SK-N-SH (cell line): ENCODE measurements at regions of chr6 and their contacts with region 1.

Region 1: GRCh38 chr6:158644231-158645063 is at the start of gene DYNLT1:
- DNase-seq: peak; percentile 98
- H3K4me3 ChIP-seq: peak within 1 kb of the TSS; percentile 76 to 96
- H3K27ac ChIP-seq: peak within 1 kb of the TSS; percentile 94 to 95
- H3K4me1 ChIP-seq: peaks cover 20 to 30% of the 10 kb centered on the region in 2 experiments
- H3K27me3 ChIP-seq: no peaks in the 10 kb centered on the region
- CTCF ChIP-seq: no peak
- EP300 ChIP-seq: no peak
- RAD21 ChIP-seq: peak; percentile 33
- polyA plus RNA-seq, gene DYNLT1: 306 and 390 TPM in 2 replicates

Region 2: GRCh38 chr6:158621694-158622544 is 22.5 kb before region 1 on chr6:
- CTCF ChIA-PET with region 1: interaction called, 3 read pairs
- POLR2A ChIA-PET with region 1: interaction called, 14 read pairs
- DNase-seq: peak; percentile 85
- H3K4me3 ChIP-seq: no peak overlapping the region; a peak in 1 of 4 replicates
- H3K27ac ChIP-seq: peak overlapping the region in 1 of 2 experiments; percentile 99; a peak in 2 of 4 replicates
- H3K4me1 ChIP-seq: peaks cover 0 to 45% of the 10 kb centered on the region in 2 experiments; a peak in 2 of 4 replicates
- H3K27me3 ChIP-seq: no peaks in the 10 kb centered on the region
- CTCF ChIP-seq: no peak
- EP300 ChIP-seq: peak in 1 of 2 experiments; percentile 87; a peak in 2 of 4 replicates
- RAD21 ChIP-seq: no peak; the same call in 1 of the 2 replicates

Region 3: DNA sequence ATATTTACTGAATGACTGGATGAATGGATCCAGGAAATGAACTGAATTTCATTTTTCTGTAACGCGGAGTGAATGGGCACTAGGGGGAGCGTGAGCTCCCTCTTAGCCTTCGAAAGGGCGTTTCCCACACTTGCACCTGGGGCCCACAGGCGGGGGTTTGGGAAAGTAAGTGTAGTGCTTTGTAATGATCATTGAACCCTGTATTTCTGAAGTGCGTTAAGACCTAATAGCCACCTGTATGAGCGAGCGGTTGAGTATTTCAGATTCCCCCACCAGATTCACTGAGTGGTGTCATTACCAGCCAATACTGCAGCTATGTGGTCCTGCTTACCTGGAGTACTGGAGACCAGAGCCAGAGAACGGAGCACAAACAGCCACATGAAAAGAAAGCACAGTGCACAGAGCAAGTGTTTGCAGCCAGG is 15.9 kb after region 1 on chr6:
- CTCF ChIA-PET with region 1: interaction called, 11 read pairs
- POLR2A ChIA-PET with region 1: no interaction called
- DNase-seq: peak; percentile 55
- H3K4me3 ChIP-seq: no peak overlapping the region
- H3K27ac ChIP-seq: no peak overlapping the region
- H3K4me1 ChIP-seq: peaks cover 5 to 9% of the 10 kb centered on the region in 2 experiments; a peak in 2 of 4 replicates
- H3K27me3 ChIP-seq: no peaks in the 10 kb centered on the region
- CTCF ChIP-seq: peak; percentile 61
- EP300 ChIP-seq: no peak
- RAD21 ChIP-seq: peak; percentile 50